ENCODE measurements at regions of chr9 and their contacts with region 1.

Region 1: GRCh38 chr9:85964949-85965348 is 24.0 kb downstream of the NAA35 start:
- DNase-seq: no peak
- ATAC-seq: no peak
- H3K4me3 ChIP-seq: no peak overlapping the region
- H3K27ac ChIP-seq: no peak overlapping the region
- H3K4me1 ChIP-seq: no peaks in the 10 kb centered on the region
- H3K27me3 ChIP-seq: no peaks in the 10 kb centered on the region
- CTCF ChIP-seq: no peak
- POLR2A ChIP-seq: no peak
- RAD21 ChIP-seq: no peak

Region 2: GRCh38 chr9:86022687-86023266 is 57.8 kb after region 1 on chr9:
- CTCF ChIA-PET with region 1: no interaction called
- POLR2A ChIA-PET with region 1: no interaction called
- RAD21 ChIA-PET with region 1: no interaction called
- intact Hi-C with region 1: loop called (anchors 5 kb)
- DNase-seq: no peak
- ATAC-seq: no peak
- H3K4me3 ChIP-seq: no peak overlapping the region
- H3K27ac ChIP-seq: no peak overlapping the region
- H3K4me1 ChIP-seq: no peaks in the 10 kb centered on the region
- H3K27me3 ChIP-seq: no peaks in the 10 kb centered on the region
- CTCF ChIP-seq: no peak
- POLR2A ChIP-seq: no peak
- RAD21 ChIP-seq: no peak

Measured in HCT116 (cell line).